ENCODE measurements at regions of chr1 and their contacts with region 1.

Region 1: GRCh38 chr1:170145770-170146676 is at the start of gene NTMT2:
- DNase-seq: peak; percentile 96
- H3K4me3 ChIP-seq: no peak within 1 kb of the TSS
- H3K27ac ChIP-seq: no peak within 1 kb of the TSS
- H3K4me1 ChIP-seq: peaks cover 18% of the 10 kb centered on the region
- H3K27me3 ChIP-seq: peaks cover 5% of the 10 kb centered on the region
- CTCF ChIP-seq: no peak
- total RNA-seq, gene NTMT2: not detected in 2 replicates

Region 2: GRCh38 chr1:170017478-170017877 is 128.5 kb before region 1 on chr1:
- CTCF ChIA-PET with region 1: no interaction called
- POLR2A ChIA-PET with region 1: no interaction called
- intact Hi-C with region 1: loop called (anchors 5 kb)
- DNase-seq: no peak
- H3K4me3 ChIP-seq: no peak overlapping the region
- H3K27ac ChIP-seq: no peak overlapping the region
- H3K4me1 ChIP-seq: no peaks in the 10 kb centered on the region
- H3K27me3 ChIP-seq: no peaks in the 10 kb centered on the region
- CTCF ChIP-seq: no peak

Measured in A673 (cell line).